ENCODE measurements at regions of chr1 and their contacts with region 1.

Region 1: GRCh38 chr1:183139281-183139942 is 46.7 kb upstream of the LAMC2 start:
- DNase-seq: no peak
- ATAC-seq: peak in 3 of 8 donors; percentile 49 to 68 (median 51)
- H3K4me3 ChIP-seq: no peak overlapping the region
- H3K27ac ChIP-seq: peak overlapping the region; percentile 6 to 83 (median 48)
- H3K4me1 ChIP-seq: peaks cover 0 to 49% (median 26%) of the 10 kb centered on the region in 9 donors
- H3K27me3 ChIP-seq: no peaks in the 10 kb centered on the region
- CTCF ChIP-seq: no peak

Region 2: GRCh38 chr1:182869241-182869666 is 270.2 kb before region 1 on chr1:
- intact Hi-C with region 1: loop called in 2 of 10 experiments (anchors 10 kb)
- DNase-seq: no peak
- ATAC-seq: peak in 3 of 8 donors; percentile 28 to 31 (median 28)
- H3K4me3 ChIP-seq: no peak overlapping the region
- H3K27ac ChIP-seq: no peak overlapping the region
- H3K4me1 ChIP-seq: no peaks in the 10 kb centered on the region
- H3K27me3 ChIP-seq: no peaks in the 10 kb centered on the region
- CTCF ChIP-seq: no peak